ENCODE measurements at regions of chr6 and their contacts with region 1.

Region 1: GRCh38 chr6:73732845-73733675 is 37.1 kb downstream of the CD109 start:
- DNase-seq: peak; percentile 10
- H3K4me3 ChIP-seq: no peak overlapping the region
- H3K27ac ChIP-seq: no peak overlapping the region
- H3K4me1 ChIP-seq: no peaks in the 10 kb centered on the region
- H3K27me3 ChIP-seq: no peaks in the 10 kb centered on the region
- CTCF ChIP-seq: peak; percentile 60 to 92 (median 87)
- POLR2A ChIP-seq: no peak

Region 2: DNA sequence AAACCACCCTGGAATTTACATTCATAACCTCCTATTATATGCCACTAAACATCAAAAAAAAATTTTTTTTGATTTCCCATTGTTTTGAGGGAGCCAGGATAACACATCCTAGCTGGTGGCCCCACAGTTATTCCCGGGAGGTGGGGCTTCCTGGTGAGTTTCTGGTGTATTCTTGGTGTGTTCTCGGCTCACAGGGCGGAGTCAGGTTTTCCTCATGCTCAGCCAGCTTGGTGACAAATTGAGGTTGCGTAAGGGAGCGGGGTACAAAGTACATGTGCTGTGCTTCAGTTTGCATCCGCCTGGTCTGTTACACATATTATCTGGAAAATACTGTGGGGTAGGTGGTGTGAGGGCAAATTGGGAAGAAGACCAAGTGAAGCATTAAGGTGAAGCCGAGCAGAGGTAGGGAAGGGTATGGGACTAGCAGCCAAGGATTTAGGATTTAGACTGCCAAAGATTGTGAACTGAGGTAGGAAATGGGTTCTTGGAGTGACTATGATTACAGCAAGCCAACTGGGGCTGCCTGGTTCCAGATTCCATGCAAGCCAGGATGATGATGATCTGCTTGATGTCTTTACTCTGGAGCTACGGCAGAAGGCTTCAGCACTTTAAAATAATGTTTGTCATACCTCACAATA is 166.0 kb before region 1 on chr6:
- intact Hi-C with region 1: no loop called
- DNase-seq: no peak
- H3K4me3 ChIP-seq: no peak overlapping the region
- H3K27ac ChIP-seq: peak overlapping the region; percentile 36 to 80 (median 53)
- H3K4me1 ChIP-seq: peaks cover 0 to 9% (median 5%) of the 10 kb centered on the region in 3 donors
- H3K27me3 ChIP-seq: no peaks in the 10 kb centered on the region
- CTCF ChIP-seq: no peak
- POLR2A ChIP-seq: no peak

Region 3: GRCh38 chr6:73675466-73676098 is 57.5 kb before region 1 on chr6:
- intact Hi-C with region 1: loop called (anchors 5 kb)
- DNase-seq: peak; percentile 14
- H3K4me3 ChIP-seq: no peak overlapping the region
- H3K27ac ChIP-seq: no peak overlapping the region
- H3K4me1 ChIP-seq: peaks cover 0 to 5% (median 0%) of the 10 kb centered on the region in 3 donors
- H3K27me3 ChIP-seq: peaks cover 0 to 9% (median 0%) of the 10 kb centered on the region in 4 donors
- CTCF ChIP-seq: peak; percentile 43 to 93 (median 84)
- POLR2A ChIP-seq: no peak

Region 4: GRCh38 chr6:73866305-73866704 is 133.2 kb after region 1 on chr6:
- intact Hi-C with region 1: no loop called
- DNase-seq: no peak
- H3K4me3 ChIP-seq: no peak overlapping the region
- H3K27ac ChIP-seq: no peak overlapping the region
- H3K4me1 ChIP-seq: no peaks in the 10 kb centered on the region
- H3K27me3 ChIP-seq: no peaks in the 10 kb centered on the region
- CTCF ChIP-seq: no peak
- POLR2A ChIP-seq: no peak

Measured in esophagus squamous epithelium (tissue), 5 donors.